Naive thymus-derived CD4-positive, alpha-beta T cell (primary cell): ENCODE measurements at regions of chr21 and their contacts with region 1.

Region 1: GRCh38 chr21:18369115-18369514 is 34.5 kb downstream of the TMPRSS15 start:
- DNase-seq: no peak
- ATAC-seq: no peak
- H3K4me3 ChIP-seq: no peak overlapping the region
- H3K4me3 Mint-ChIP-seq: no peak overlapping the region
- H3K27ac ChIP-seq: no peak overlapping the region
- H3K27ac Mint-ChIP-seq: no peak overlapping the region
- H3K4me1 ChIP-seq: no peaks in the 10 kb centered on the region
- H3K4me1 Mint-ChIP-seq: no peaks in the 10 kb centered on the region
- H3K27me3 ChIP-seq: no peaks in the 10 kb centered on the region
- H3K27me3 Mint-ChIP-seq: no peaks in the 10 kb centered on the region

Region 2: DNA sequence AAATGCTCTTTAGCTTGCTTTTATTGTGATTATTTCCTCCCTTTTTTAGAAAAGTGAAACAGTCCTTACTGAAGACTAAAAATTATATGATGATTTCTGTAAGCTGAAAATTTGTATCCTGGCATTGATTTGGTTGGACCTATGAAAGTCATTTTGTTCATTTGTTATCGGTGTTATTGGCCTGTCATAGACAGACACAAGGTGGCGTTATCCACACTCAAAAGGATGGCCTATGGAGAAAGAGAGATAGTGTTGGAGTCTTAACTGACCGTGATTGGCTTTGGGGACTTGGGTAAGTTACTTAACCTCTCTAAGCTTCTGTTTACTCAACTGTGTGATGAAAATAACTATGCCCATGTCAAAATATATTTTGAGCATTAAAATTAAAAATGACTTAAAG is 328.1 kb before region 1 on chr21:
- CTCF ChIA-PET with region 1: no interaction called
- POLR2A ChIA-PET with region 1: no interaction called
- intact Hi-C with region 1: loop called in 1 of 2 experiments (anchors 10 kb)
- DNase-seq: no peak
- ATAC-seq: no peak
- H3K4me3 ChIP-seq: no peak overlapping the region
- H3K4me3 Mint-ChIP-seq: no peak overlapping the region
- H3K27ac ChIP-seq: no peak overlapping the region
- H3K27ac Mint-ChIP-seq: no peak overlapping the region
- H3K4me1 ChIP-seq: no peaks in the 10 kb centered on the region
- H3K4me1 Mint-ChIP-seq: no peaks in the 10 kb centered on the region
- H3K27me3 ChIP-seq: no peaks in the 10 kb centered on the region
- H3K27me3 Mint-ChIP-seq: peaks cover 0 to 5% (median 0%) of the 10 kb centered on the region in 5 donors

Region 3: GRCh38 chr21:18318156-18318555 is 51.0 kb before region 1 on chr21:
- CTCF ChIA-PET with region 1: no interaction called
- POLR2A ChIA-PET with region 1: interaction called, 11 read pairs
- intact Hi-C with region 1: no loop called
- DNase-seq: no peak
- ATAC-seq: no peak
- H3K4me3 ChIP-seq: no peak overlapping the region
- H3K4me3 Mint-ChIP-seq: no peak overlapping the region
- H3K27ac ChIP-seq: no peak overlapping the region
- H3K27ac Mint-ChIP-seq: no peak overlapping the region
- H3K4me1 ChIP-seq: no peaks in the 10 kb centered on the region
- H3K4me1 Mint-ChIP-seq: no peaks in the 10 kb centered on the region
- H3K27me3 ChIP-seq: no peaks in the 10 kb centered on the region
- H3K27me3 Mint-ChIP-seq: no peaks in the 10 kb centered on the region